GM10248 (cell line): ENCODE measurements at regions of chr6 and their contacts with region 1.

Region 1: GRCh38 chr6:44133003-44133931 is 5.9 kb downstream of the TMEM63B start:
- DNase-seq: no peak
- CTCF ChIP-seq: no peak

Region 2: GRCh38 chr6:44111434-44112417 is 21.5 kb before region 1 on chr6:
- CTCF ChIA-PET with region 1: interaction called, 11 read pairs
- POLR2A ChIA-PET with region 1: interaction called, 3 read pairs
- DNase-seq: no peak
- CTCF ChIP-seq: no peak

Region 3: DNA sequence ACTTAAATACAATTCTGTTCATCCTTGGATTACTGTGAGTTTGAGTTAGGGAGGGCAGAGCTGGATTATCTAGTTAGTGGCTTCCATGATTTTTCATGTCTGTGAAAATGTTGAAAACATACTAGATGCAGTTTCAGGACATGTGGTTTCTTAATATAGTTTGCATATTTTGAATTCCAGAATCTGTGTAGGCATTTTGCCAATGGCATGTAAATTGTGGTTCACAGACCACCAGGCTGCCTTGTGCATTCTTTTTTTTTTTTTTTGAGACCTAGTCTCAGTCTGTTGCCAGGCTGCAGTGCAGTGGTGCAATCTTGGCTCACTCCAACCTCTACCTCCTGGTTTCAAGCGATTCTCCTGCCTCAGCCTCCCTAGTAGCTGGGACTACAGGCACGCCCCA is 297.1 kb after region 1 on chr6:
- CTCF ChIA-PET with region 1: no interaction called
- POLR2A ChIA-PET with region 1: no interaction called
- DNase-seq: no peak
- CTCF ChIP-seq: no peak